Adrenal gland (tissue), 19 donors: ENCODE measurements at regions of chr6 and their contacts with region 1.

Region 1: DNA sequence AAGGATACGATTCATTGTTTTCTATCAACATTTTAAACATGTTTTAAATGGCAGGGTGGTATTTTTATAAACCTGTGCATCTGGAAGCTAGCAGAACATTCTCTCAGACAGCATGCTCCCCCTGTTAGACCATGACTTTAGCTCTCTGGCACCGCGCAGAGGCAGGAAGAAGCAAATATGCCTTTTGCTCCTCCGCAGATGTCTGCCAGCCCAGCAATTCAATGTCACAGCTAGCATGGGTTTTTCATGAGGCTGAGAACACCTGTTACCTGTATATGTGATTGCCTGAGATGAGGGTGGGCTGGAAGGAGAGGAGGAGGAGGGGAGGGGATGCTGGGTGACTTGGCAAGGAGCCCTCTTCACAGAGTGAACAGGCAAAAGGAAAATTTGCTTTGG is 6.7 kb downstream of the MTCH1 start:
- DNase-seq: peak; percentile 66 to 81 (median 76)
- H3K4me3 ChIP-seq: no peak overlapping the region
- H3K27ac ChIP-seq: peak overlapping the region in 3 of 5 donors; percentile 30 to 78 (median 39)
- H3K4me1 ChIP-seq: peaks cover 23 to 72% of the 10 kb centered on the region in 2 donors
- H3K27me3 ChIP-seq: no peaks in the 10 kb centered on the region
- CTCF ChIP-seq: peak; percentile 44 to 80 (median 71)
- POLR2A ChIP-seq: no peak

Region 2: DNA sequence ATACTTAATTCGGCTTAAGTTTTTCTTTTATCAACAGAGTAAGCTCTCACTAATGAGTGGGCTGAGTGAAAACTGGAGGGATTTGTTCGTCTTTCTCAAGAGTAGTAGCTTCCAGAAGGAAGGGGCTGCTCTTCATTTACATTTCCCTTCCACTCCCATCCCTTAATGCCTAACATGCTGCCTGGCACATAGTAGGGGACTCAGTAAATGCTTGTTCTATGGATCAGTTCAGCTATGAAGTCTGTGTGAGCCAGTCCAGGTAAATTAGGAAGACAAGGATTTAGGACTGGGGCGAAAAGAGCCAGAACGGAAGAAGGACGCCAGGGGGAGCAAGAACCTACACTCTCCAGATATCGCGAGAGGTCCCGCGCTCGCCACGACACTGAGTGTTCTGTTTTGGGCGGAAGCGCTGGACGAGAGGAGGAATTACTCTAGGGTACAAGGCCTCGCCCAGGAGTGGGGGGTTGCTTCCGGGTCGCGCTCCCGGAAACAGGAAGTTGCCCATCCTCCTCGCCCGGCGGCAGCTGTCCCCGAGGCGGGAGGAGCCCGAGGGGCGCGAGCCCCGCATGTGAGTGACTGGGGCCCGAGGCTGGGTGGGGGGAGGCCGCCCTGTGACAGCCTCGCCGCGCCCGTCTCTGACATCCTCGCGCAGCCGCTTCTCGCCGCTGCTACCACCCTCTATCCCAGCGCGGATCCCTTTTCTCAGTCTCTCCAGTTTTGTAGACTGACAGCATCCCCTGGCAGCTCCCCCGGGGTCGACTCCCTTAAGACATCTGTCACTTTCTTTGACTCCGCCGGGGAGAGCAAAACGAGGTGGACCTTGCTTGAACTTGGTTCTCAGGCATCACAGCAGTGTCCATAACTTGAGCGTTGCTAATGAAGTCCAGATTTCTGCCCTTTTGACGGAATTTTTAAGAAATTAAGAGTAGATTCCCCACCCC is 93.6 kb before region 1 on chr6 and contains the start of gene C6orf89:
- intact Hi-C with region 1: loop called (anchors 5 kb)
- DNase-seq: peak; percentile 96 to 99 (median 99)
- H3K4me3 ChIP-seq: peak within 1 kb of the TSS; percentile 30 to 81 (median 58)
- H3K27ac ChIP-seq: peak within 1 kb of the TSS; percentile 53 to 92 (median 78)
- H3K4me1 ChIP-seq: peaks cover 17 to 31% of the 10 kb centered on the region in 2 donors
- H3K27me3 ChIP-seq: no peaks in the 10 kb centered on the region
- CTCF ChIP-seq: peak; percentile 61 to 98 (median 95)
- POLR2A ChIP-seq: peak; percentile 39 to 77
- total RNA-seq, gene C6orf89: 43.3 to 107 (median 87.9) TPM

Region 3: GRCh38 chr6:36897609-36898008 is 81.7 kb before region 1 on chr6:
- intact Hi-C with region 1: loop called in 1 of 2 experiments (anchors 5 kb)
- DNase-seq: peak in 1 of 7 donors; percentile 33
- H3K4me3 ChIP-seq: no peak overlapping the region
- H3K27ac ChIP-seq: no peak overlapping the region
- H3K4me1 ChIP-seq: peaks cover 8 to 9% of the 10 kb centered on the region in 2 donors
- H3K27me3 ChIP-seq: no peaks in the 10 kb centered on the region
- CTCF ChIP-seq: peak in 2 of 6 experiments; percentile 15 to 17
- POLR2A ChIP-seq: no peak

Region 4: GRCh38 chr6:36929607-36930006 is 49.7 kb before region 1 on chr6:
- intact Hi-C with region 1: loop called in 1 of 2 experiments (anchors 10 kb)
- DNase-seq: peak in 6 of 7 donors; percentile 38 to 81 (median 58)
- H3K4me3 ChIP-seq: no peak overlapping the region
- H3K27ac ChIP-seq: peak overlapping the region in 3 of 5 donors; percentile 36 to 53 (median 46)
- H3K4me1 ChIP-seq: peaks cover 18 to 30% of the 10 kb centered on the region in 2 donors
- H3K27me3 ChIP-seq: no peaks in the 10 kb centered on the region
- CTCF ChIP-seq: no peak
- POLR2A ChIP-seq: no peak